ENCODE measurements at regions of chr14 and their contacts with region 1.

Region 1: GRCh38 chr14:44961604-44962333 is at the starts of genes KLHL28 and TOGARAM1:
- DNase-seq: peak; percentile 98
- H3K4me3 ChIP-seq: peak within 1 kb of the TSS; percentile 65 to 77 (median 72)
- H3K27ac ChIP-seq: peak within 1 kb of the TSS; percentile 90 to 97 (median 94)
- H3K4me1 ChIP-seq: peaks cover 24 to 72% (median 41%) of the 10 kb centered on the region in 4 donors
- H3K27me3 ChIP-seq: no peaks in the 10 kb centered on the region
- CTCF ChIP-seq: peak in 1 of 5 experiments; percentile 1
- EP300 ChIP-seq: no peak
- POLR2A ChIP-seq: peak; percentile 96
- total RNA-seq, gene KLHL28: 1.00 to 22.1 (median 15.3) TPM
- total RNA-seq, gene TOGARAM1: 13.5 to 23.6 (median 17.9) TPM

Region 2: GRCh38 chr14:44901696-44902095 is 60.1 kb before region 1 on chr14:
- in situ Hi-C with region 1: loop called in 1 of 4 experiments (anchors 10 kb)
- intact Hi-C with region 1: no loop called
- DNase-seq: no peak
- H3K4me3 ChIP-seq: no peak overlapping the region
- H3K27ac ChIP-seq: no peak overlapping the region
- H3K4me1 ChIP-seq: peaks cover 0 to 15% (median 0%) of the 10 kb centered on the region in 4 donors
- H3K27me3 ChIP-seq: no peaks in the 10 kb centered on the region
- CTCF ChIP-seq: no peak
- EP300 ChIP-seq: no peak
- POLR2A ChIP-seq: no peak

Region 3: DNA sequence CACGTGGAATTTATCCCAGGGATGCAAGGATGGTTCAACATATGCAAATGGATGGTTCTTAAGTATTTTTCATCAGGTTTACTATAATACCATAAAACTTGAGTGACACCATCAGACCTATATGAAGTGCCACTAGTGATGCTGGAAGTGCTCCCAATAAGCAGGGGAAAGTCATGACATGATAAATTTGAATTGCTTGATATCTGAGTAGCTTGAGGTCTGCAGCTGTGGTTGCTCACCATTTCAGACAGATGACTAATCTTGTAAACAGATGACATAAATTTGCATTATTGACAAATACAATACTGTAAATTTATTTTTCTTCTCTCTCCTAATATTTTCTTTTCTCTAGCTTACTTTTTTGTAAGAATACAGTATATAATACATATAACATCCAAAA is 108.4 kb after region 1 on chr14:
- in situ Hi-C with region 1: loop called in 1 of 4 experiments (anchors 10 kb)
- intact Hi-C with region 1: no loop called
- DNase-seq: no peak
- H3K4me3 ChIP-seq: no peak overlapping the region
- H3K27ac ChIP-seq: no peak overlapping the region
- H3K4me1 ChIP-seq: peaks cover 0 to 11% (median 0%) of the 10 kb centered on the region in 4 donors
- H3K27me3 ChIP-seq: no peaks in the 10 kb centered on the region
- CTCF ChIP-seq: no peak
- EP300 ChIP-seq: no peak
- POLR2A ChIP-seq: no peak

Region 4: DNA sequence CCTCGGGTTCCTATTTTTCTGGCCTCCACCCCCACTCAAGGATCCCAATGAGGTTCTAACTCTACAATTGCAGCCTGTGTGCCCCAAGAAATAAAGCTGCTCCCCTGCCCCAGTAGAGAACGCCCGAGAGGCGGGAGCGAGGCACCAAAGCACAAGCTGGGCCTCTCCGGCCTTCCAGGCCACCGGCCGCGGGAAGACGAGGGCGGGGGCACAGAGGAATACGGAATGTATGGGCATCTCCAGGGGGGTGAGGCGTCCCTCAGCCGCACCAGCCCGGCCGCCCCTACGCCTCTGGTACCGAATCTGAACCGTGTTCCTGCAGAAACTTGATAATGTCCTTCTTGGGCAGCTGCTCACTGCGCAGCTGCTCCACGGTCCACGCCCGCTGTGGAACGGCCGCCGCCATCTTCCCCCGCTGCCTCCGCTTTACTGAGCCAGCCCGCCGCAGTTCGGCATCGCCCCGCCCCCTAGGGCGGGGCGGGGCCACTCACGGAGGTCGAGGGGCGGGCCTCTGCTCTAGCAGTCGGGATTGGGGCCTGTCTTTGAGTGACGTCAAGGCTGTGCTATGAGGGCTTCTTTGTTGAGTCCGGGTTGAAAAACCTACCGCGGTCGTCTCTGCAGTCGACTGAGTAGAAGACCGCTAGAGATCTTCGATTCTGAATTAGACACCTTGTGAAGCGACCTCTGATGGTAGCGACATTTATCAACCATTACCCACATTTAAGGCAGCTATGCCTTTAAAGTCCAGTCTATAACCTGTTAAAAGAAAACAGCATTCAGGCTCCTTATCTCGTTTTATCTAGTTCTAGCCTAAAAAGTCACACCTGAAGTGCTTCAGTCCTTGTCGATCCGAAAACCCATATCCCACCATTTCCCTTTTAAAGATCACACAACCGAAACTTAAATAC is 172.5 kb after region 1 on chr14 and contains the start of gene FKBP3:
- in situ Hi-C with region 1: loop called in 2 of 4 experiments (anchors 5 to 10 kb)
- intact Hi-C with region 1: loop called (anchors 10 kb)
- DNase-seq: peak; percentile 97
- H3K4me3 ChIP-seq: peak within 1 kb of the TSS; percentile 50 to 96 (median 66)
- H3K27ac ChIP-seq: peak within 1 kb of the TSS; percentile 90 to 93 (median 92)
- H3K4me1 ChIP-seq: peaks cover 6 to 26% (median 23%) of the 10 kb centered on the region in 4 donors
- H3K27me3 ChIP-seq: no peaks in the 10 kb centered on the region
- CTCF ChIP-seq: peak in 1 of 5 experiments; percentile 12
- EP300 ChIP-seq: no peak
- POLR2A ChIP-seq: peak; percentile 93
- total RNA-seq, gene FKBP3: 3.7 to 47.8 (median 27.7) TPM

Region 5: GRCh38 chr14:45253068-45253753 is 291.4 kb after region 1 on chr14 and contains the start of gene MIS18BP1:
- in situ Hi-C with region 1: no loop called
- intact Hi-C with region 1: no loop called
- DNase-seq: peak; percentile 97
- H3K4me3 ChIP-seq: peak within 1 kb of the TSS; percentile 50 to 89 (median 64)
- H3K27ac ChIP-seq: peak within 1 kb of the TSS; percentile 87 to 93 (median 90)
- H3K4me1 ChIP-seq: peaks cover 5 to 31% (median 13%) of the 10 kb centered on the region in 4 donors
- H3K27me3 ChIP-seq: no peaks in the 10 kb centered on the region
- CTCF ChIP-seq: peak; percentile 71 to 92 (median 77)
- EP300 ChIP-seq: no peak
- POLR2A ChIP-seq: peak; percentile 82
- total RNA-seq, gene MIS18BP1: 23.5 to 61.7 (median 38.4) TPM

Measured in transverse colon (tissue), 4 donors.